ENCODE measurements at regions of chr9 and their contacts with region 1.

Region 1: GRCh38 chr9:92501671-92502393 is 19.5 kb upstream of the ASPN start:
- DNase-seq: peak in 2 of 5 donors; percentile 40 to 43
- ATAC-seq: peak; percentile 58 to 80 (median 64)
- H3K4me3 ChIP-seq: no peak overlapping the region
- H3K27ac ChIP-seq: peak overlapping the region in 6 of 12 donors; percentile 1 to 67 (median 18)
- H3K4me1 ChIP-seq: peaks cover 0 to 63% (median 20%) of the 10 kb centered on the region in 12 donors
- H3K27me3 ChIP-seq: no peaks in the 10 kb centered on the region
- CTCF ChIP-seq: peak in 10 of 12 donors; percentile 23 to 54 (median 33)
- POLR2A ChIP-seq: no peak

Region 2: GRCh38 chr9:92607773-92608172 is 105.9 kb after region 1 on chr9:
- intact Hi-C with region 1: loop called in 1 of 10 experiments (anchors 10 kb)
- DNase-seq: peak in 1 of 5 donors; percentile 52
- ATAC-seq: peak in 3 of 4 donors; percentile 3 to 23 (median 6)
- H3K4me3 ChIP-seq: no peak overlapping the region
- H3K27ac ChIP-seq: peak overlapping the region in 11 of 12 donors; percentile 23 to 94 (median 83)
- H3K4me1 ChIP-seq: peaks cover 0 to 55% (median 30%) of the 10 kb centered on the region in 12 donors
- H3K27me3 ChIP-seq: no peaks in the 10 kb centered on the region
- CTCF ChIP-seq: no peak
- POLR2A ChIP-seq: no peak

Measured in heart left ventricle (tissue), 16 donors.